Calu3 (cell line): ENCODE measurements at regions of chr5 and their contacts with region 1.

Region 1: DNA sequence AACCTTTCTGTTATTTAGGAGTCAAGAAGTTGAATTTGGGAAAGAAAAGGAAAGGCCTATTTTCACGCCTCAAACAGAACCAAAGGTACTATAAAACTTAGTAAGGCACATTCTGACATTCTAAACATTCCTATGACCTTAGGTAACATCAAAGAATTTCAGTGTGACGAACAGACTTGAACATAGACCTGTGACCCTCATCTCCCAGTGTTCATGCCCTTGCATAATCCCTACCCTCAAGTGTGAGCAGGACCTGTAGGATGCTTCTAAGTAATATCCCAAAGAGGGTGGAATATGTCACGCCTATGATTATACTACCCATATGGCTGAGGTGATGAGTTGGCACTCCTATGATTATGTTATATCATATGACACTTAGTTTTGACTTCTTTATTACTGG is 540.9 kb downstream of the KIF4B start:
- DNase-seq: no peak
- H3K4me3 Mint-ChIP-seq: no peak overlapping the region
- H3K27ac Mint-ChIP-seq: no peak overlapping the region
- H3K4me1 Mint-ChIP-seq: no peaks in the 10 kb centered on the region
- H3K27me3 Mint-ChIP-seq: no peaks in the 10 kb centered on the region
- CTCF ChIP-seq: no peak

Region 2: GRCh38 chr5:156402387-156402921 is 848.0 kb after region 1 on chr5:
- CTCF ChIA-PET with region 1: no interaction called
- intact Hi-C with region 1: loop called (anchors 5 kb)
- DNase-seq: no peak
- H3K4me3 Mint-ChIP-seq: no peak overlapping the region
- H3K27ac Mint-ChIP-seq: no peak overlapping the region
- H3K4me1 Mint-ChIP-seq: no peaks in the 10 kb centered on the region
- H3K27me3 Mint-ChIP-seq: no peaks in the 10 kb centered on the region
- CTCF ChIP-seq: no peak